RWPE1 (cell line): ENCODE measurements at regions of chr1 and their contacts with region 1.

Region 1: DNA sequence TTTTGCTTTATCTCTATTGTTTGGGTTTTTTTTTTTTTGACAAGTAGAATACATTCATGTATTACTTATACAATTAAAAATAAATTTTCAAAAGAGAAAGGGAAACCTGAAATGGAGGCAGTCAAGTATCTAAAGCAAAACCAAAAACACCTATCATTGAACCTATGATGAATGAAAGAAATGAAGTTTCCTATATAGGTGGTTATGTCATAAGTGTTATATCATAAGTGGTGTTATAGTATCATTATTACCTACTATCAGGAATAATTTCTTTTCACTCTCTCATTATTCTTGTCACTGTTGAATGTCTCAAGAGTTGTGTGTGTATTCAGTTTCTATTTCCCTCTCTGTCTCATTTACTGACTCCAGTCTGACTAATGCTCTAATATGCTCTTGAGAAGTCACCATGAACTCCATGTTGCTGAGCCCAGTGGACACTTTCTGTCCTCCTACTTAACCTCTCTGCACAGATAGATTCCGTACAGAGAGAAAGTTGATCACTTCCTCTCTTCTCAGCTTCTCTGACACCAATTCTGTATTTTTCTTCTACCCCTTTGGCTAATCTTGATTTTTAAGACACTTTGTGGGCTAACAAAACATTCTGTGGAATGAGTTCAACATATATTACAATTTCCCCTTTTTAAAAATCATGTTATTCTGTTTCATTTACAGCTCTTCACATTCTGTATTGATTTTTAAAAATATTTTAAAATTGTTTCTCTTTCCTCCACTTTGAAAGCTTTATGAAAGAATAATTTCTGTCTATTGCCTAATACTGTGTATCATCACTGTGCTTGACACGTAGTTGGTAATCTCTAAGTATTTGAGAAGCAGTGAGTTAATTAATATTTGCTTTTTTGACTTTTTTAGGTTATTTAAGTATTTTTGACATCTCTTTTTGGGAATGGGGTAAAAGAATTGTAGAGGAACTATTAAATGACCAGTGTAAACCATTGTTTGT is 50.1 kb downstream of the RASAL2 start:
- DNase-seq: no peak
- H3K27ac ChIP-seq: no peak overlapping the region
- CTCF ChIP-seq: no peak

Region 2: GRCh38 chr1:179042087-179042486 is 898.1 kb after region 1 on chr1:
- CTCF ChIA-PET with region 1: no interaction called
- POLR2A ChIA-PET with region 1: interaction called, 14 read pairs
- DNase-seq: no peak
- H3K27ac ChIP-seq: no peak overlapping the region
- CTCF ChIP-seq: no peak